SK-N-SH (cell line): ENCODE measurements at regions of chr6 and their contacts with region 1.

Region 1: DNA sequence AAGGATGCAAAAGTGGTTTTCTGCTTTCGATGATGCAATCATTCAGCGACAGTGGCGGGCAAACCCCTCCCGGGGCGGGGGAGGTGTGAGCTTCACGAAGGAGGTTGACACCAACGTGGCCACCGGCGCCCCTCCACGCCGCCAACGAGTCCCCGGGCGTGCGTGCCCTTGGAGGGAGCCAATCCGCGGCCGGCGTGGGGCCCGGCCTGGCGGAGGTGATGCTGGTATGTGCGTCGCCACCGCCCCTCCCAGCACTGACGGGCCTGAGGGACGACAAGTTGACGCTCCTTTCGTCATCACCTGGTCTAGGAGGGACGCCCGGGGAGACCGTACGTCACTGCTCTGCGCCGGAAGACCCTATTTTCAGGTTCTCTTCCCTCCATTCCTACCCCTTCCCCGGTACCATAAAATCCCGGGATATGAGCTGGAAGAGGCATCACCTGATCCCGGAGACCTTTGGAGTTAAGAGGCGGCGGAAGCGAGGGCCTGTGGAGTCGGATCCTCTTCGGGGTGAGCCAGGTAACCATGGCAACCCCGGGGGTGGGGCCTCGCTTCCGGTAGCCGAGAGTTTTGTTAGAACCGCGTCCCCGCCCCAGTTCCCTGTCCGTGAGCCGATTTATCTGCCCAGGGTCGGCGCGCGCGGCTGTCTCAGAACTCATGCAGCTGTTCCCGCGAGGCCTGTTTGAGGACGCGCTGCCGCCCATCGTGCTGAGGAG is at the start of gene DXO:
- DNase-seq: peak; percentile 98
- H3K4me3 ChIP-seq: peak within 1 kb of the TSS; percentile 91 to 94
- H3K27ac ChIP-seq: peak within 1 kb of the TSS; percentile 95 to 97
- H3K4me1 ChIP-seq: peaks cover 5 to 26% of the 10 kb centered on the region in 2 experiments; a peak in 3 of 4 replicates
- H3K27me3 ChIP-seq: no peaks in the 10 kb centered on the region
- CTCF ChIP-seq: no peak
- EP300 ChIP-seq: no peak
- RAD21 ChIP-seq: no peak
- polyA plus RNA-seq, gene DXO: 25.3 and 27.1 TPM in 2 replicates

Region 2: DNA sequence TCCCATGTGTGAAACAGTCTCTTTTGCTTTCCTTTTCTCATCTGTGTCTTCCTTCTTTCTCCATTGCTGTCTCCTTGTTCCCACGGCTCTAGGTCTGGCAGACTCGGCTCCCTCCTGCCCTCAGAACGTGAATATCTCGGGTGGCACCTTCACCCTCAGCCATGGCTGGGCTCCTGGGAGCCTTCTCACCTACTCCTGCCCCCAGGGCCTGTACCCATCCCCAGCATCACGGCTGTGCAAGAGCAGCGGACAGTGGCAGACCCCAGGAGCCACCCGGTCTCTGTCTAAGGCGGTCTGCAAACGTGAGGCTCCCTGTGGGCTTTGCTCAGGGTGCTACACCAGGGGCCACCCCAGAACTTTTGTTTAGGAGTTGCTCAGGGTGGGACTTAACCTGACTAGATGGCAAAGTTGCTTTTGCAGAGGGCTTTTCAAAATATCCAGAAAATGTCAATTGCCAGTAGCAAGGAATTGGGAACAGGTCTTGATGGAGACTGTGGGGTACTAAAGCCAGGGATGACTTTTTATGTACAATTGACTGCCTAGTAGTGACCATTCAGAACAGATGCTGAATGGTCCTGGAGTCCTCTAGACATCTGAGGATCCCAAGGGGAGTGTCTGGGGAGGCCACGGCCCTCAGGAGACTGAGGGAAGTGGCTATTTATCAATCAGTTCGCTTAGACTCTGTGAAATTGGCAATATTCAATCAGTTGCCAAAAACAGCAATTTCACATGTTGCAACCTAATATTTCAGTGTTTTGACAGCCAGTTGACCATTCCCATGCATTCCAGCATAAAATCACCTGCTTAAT is 44.1 kb before region 1 on chr6:
- CTCF ChIA-PET with region 1: no interaction called
- POLR2A ChIA-PET with region 1: no interaction called
- DNase-seq: no peak
- H3K4me3 ChIP-seq: no peak overlapping the region
- H3K27ac ChIP-seq: no peak overlapping the region
- H3K4me1 ChIP-seq: no peaks in the 10 kb centered on the region
- H3K27me3 ChIP-seq: no peaks in the 10 kb centered on the region; the same call in 1 of the 2 replicates
- CTCF ChIP-seq: no peak
- EP300 ChIP-seq: no peak
- RAD21 ChIP-seq: no peak

Region 3: DNA sequence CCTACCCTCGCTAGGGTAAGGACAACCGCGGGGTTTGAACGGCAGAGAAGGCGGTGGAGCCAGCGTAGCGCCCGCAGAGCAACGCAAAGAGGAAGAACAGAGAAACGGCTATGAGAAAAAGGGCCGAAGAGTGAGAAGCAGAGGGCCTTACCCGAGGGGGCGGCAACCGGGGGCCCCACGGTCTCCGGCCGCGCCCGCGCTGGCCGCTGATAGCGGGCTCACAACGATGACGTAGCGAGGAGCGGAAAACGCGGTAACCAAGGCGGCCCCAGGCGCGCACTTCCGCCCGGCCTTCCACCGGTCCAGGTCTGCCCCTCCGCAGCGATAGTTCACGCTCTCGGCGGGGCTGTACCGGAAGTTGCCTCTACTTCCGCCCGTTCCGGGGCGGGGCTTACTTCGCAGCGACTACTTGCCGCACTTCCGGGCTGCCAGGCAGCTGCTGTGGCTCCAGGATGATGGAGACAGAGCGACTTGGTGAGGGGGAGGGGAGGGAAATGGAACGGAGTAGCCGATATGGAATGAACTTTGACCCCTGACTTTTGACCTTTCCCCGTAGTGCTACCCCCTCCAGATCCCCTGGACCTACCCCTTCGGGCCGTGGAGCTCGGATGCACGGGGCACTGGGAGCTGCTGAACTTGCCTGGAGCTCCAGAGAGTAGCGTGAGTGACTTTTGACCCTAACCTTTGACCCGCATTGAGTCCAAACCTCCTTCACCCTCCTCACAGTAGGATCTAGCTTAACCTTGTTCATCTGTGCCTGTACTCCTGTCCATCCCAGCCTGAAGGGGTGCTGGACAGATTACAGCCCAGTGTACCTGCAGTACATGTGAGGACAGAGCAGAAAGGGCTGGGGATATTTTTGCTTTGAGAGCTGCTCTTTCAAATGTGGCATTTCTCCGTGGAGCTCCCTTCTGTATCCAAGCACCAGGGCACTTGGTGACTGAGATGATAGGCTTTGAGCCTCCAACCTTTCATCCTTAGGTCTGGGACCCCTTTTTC is 13.1 kb before region 1 on chr6 and contains the starts of genes NELFE and SKIC2:
- CTCF ChIA-PET with region 1: interaction called, 29 read pairs
- POLR2A ChIA-PET with region 1: interaction called, 20 read pairs
- DNase-seq: peak; percentile 99
- H3K4me3 ChIP-seq: peak within 1 kb of the TSS; percentile 100
- H3K27ac ChIP-seq: peak within 1 kb of the TSS; percentile 70 to 84
- H3K4me1 ChIP-seq: peaks cover 0 to 17% of the 10 kb centered on the region in 2 experiments; a peak in 2 of 4 replicates
- H3K27me3 ChIP-seq: no peaks in the 10 kb centered on the region
- CTCF ChIP-seq: no peak
- EP300 ChIP-seq: 0 out of 4 replicates have a peak, but pooled peaks of 1 of the 2 experiments have one; percentile 9
- RAD21 ChIP-seq: no peak
- polyA plus RNA-seq, gene NELFE: 89.5 and 116 TPM in 2 replicates
- polyA plus RNA-seq, gene SKIC2: 86.3 and 89.4 TPM in 2 replicates